PC-3 (cell line): ENCODE measurements at regions of chr9 and their contacts with region 1.

Region 1: GRCh38 chr9:112921549-112921948 is 30.9 kb upstream of the SLC46A2 start:
- DNase-seq: peak; percentile 53
- ATAC-seq: 0 out of 2 replicates have a peak, but pooled peaks have one; percentile 40
- H3K4me3 ChIP-seq: no peak overlapping the region
- H3K27ac ChIP-seq: no peak overlapping the region
- H3K4me1 ChIP-seq: peaks cover 21% of the 10 kb centered on the region
- H3K27me3 ChIP-seq: no peaks in the 10 kb centered on the region
- CTCF ChIP-seq: peak; percentile 64

Region 2: GRCh38 chr9:112955550-112955949 is 34.0 kb after region 1 on chr9:
- CTCF ChIA-PET with region 1: no interaction called
- POLR2A ChIA-PET with region 1: no interaction called
- intact Hi-C with region 1: no loop called
- DNase-seq: no peak
- ATAC-seq: no peak
- H3K4me3 ChIP-seq: no peak overlapping the region
- H3K27ac ChIP-seq: no peak overlapping the region
- H3K4me1 ChIP-seq: no peaks in the 10 kb centered on the region
- H3K27me3 ChIP-seq: peaks cover 18% of the 10 kb centered on the region
- CTCF ChIP-seq: no peak

Region 3: GRCh38 chr9:112971415-112971814 is 49.9 kb after region 1 on chr9:
- CTCF ChIA-PET with region 1: no interaction called
- POLR2A ChIA-PET with region 1: no interaction called
- intact Hi-C with region 1: loop called (anchors 2 kb)
- DNase-seq: peak; percentile 29
- ATAC-seq: peak; percentile 50; the same call in 1 of the 2 replicates
- H3K4me3 ChIP-seq: no peak overlapping the region
- H3K27ac ChIP-seq: no peak overlapping the region
- H3K4me1 ChIP-seq: no peaks in the 10 kb centered on the region
- H3K27me3 ChIP-seq: no peaks in the 10 kb centered on the region
- CTCF ChIP-seq: peak; percentile 39

Region 4: GRCh38 chr9:113247640-113248039 is 326.1 kb after region 1 on chr9:
- CTCF ChIA-PET with region 1: no interaction called
- POLR2A ChIA-PET with region 1: no interaction called
- intact Hi-C with region 1: no loop called
- DNase-seq: no peak
- ATAC-seq: no peak
- H3K4me3 ChIP-seq: no peak overlapping the region
- H3K27ac ChIP-seq: no peak overlapping the region
- H3K4me1 ChIP-seq: no peaks in the 10 kb centered on the region
- H3K27me3 ChIP-seq: no peaks in the 10 kb centered on the region
- CTCF ChIP-seq: no peak